GM12878 (cell line): ENCODE measurements at regions of chr4 and their contacts with region 1.

Region 1: DNA sequence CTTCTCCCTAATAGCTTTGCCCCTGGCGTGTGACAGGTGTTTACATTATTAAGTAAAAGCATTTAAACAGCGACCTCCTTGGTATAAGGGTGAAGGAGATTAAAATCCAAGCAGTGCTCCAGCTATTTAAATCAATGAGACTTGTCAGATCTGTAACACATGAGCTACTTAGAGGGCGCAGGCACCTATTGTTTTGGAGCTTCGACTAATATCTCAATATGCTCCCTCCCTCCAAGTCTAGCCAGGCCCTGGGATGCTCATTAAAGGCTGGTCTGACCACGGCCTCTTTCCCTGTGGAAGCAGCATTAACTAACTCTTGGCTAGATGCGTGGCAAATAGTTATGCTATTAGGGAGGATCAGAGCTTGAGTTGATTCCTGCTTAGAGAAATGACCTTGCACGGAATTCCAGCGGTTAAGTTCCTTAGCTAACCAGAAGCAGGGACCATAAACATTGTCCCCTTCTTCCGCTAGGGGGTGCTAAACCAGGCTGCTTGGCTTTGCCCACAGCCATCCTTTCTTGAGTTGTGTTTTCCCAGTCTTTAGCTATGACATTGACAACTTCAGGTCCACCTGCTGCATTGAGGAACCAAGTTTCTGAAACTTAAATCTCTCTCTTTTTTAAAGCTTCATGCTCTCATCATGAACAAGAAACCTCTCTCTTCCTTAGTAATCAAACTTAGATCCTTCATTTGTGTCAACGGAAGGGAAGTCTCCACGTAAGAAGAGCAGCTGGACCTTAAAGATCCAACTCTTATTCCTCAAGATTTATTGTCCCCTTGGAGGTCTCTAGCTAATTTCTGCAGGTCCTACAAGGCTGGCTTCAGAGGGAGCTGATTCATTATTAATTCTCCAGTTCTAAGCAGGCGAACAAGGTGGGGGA is 80.7 kb upstream of the IGFBP7 start:
- DNase-seq: no peak
- ATAC-seq: peak; percentile 78
- H3K4me3 ChIP-seq: no peak overlapping the region
- H3K27ac ChIP-seq: no peak overlapping the region
- H3K4me1 ChIP-seq: no peaks in the 10 kb centered on the region
- H3K27me3 ChIP-seq: peaks cover 0 to 1% of the 10 kb centered on the region in 2 experiments; a peak in 2 of 4 replicates
- CTCF ChIP-seq: peak; percentile 44 to 83 (median 78)
- EP300 ChIP-seq: no peak
- POLR2A ChIP-seq: no peak
- RAD21 ChIP-seq: peak; percentile 35; the same call in 1 of the 2 replicates

Region 2: DNA sequence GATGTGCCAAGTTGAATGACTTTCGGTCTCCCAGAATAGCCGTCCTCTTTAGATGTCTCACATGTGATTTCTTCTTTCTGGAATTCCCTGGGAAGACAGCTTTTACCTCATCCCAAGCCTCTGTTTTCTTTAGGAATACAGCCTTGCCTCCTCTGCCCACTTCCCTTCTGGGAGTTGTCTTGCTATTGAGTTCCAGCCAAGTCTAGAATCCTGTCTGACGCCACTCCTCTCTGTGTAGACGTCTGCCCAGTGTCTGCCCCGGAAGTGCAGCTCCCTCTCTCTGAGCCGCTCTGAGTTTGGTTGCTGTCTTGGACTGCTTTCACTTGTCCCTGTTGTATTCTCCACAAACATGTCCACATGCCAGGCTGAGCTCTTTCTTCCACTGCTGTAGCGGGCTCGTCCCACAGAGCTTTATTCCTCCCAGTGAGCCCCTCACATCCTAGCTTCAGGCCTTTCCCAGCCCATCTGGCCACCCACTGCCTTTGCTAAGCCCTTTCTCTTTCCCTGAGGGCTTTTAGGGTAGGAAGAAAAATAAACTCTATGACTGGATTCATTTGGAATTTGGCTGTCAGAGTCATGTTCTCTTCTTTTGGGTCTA is 71.7 kb before region 1 on chr4:
- CTCF ChIA-PET with region 1: no interaction called
- POLR2A ChIA-PET with region 1: no interaction called
- RAD21 ChIA-PET with region 1: no interaction called
- SMC1A ChIA-PET with region 1: no interaction called
- in situ Hi-C with region 1: no loop called
- intact Hi-C with region 1: no loop called
- DNase-seq: no peak
- ATAC-seq: no peak
- H3K4me3 ChIP-seq: no peak overlapping the region
- H3K27ac ChIP-seq: no peak overlapping the region
- H3K4me1 ChIP-seq: no peaks in the 10 kb centered on the region
- H3K27me3 ChIP-seq: no peaks in the 10 kb centered on the region; a peak in 2 of 4 replicates
- CTCF ChIP-seq: no peak
- EP300 ChIP-seq: no peak
- POLR2A ChIP-seq: no peak
- RAD21 ChIP-seq: no peak

Region 3: GRCh38 chr4:57200928-57201327 is 10.1 kb after region 1 on chr4:
- CTCF ChIA-PET with region 1: interaction called, 13 read pairs
- POLR2A ChIA-PET with region 1: no interaction called
- RAD21 ChIA-PET with region 1: no interaction called
- SMC1A ChIA-PET with region 1: interaction called, 8 read pairs
- in situ Hi-C with region 1: no loop called
- intact Hi-C with region 1: no loop called
- DNase-seq: no peak
- ATAC-seq: no peak
- H3K4me3 ChIP-seq: no peak overlapping the region
- H3K27ac ChIP-seq: no peak overlapping the region
- H3K4me1 ChIP-seq: no peaks in the 10 kb centered on the region
- H3K27me3 ChIP-seq: no peaks in the 10 kb centered on the region
- CTCF ChIP-seq: no peak
- EP300 ChIP-seq: no peak
- POLR2A ChIP-seq: no peak
- RAD21 ChIP-seq: no peak